ENCODE measurements at regions of chr9 and their contacts with region 1.

Region 1: GRCh38 chr9:115591584-115591984 is 473.6 kb upstream of the TNC start:
- DNase-seq: peak; percentile 48 to 63
- H3K4me3 ChIP-seq: no peak overlapping the region
- H3K27ac ChIP-seq: no peak overlapping the region
- H3K4me1 ChIP-seq: peaks cover 1 to 8% (median 2%) of the 10 kb centered on the region in 4 experiments; a peak in 3 of 7 replicates
- H3K27me3 ChIP-seq: no peaks in the 10 kb centered on the region
- CTCF ChIP-seq: peak in 2 of 3 experiments; percentile 67 to 92; a peak in 3 of 4 replicates
- EP300 ChIP-seq: no peak
- POLR2A ChIP-seq: no peak
- RAD21 ChIP-seq: peak; percentile 84 to 89

Region 2: DNA sequence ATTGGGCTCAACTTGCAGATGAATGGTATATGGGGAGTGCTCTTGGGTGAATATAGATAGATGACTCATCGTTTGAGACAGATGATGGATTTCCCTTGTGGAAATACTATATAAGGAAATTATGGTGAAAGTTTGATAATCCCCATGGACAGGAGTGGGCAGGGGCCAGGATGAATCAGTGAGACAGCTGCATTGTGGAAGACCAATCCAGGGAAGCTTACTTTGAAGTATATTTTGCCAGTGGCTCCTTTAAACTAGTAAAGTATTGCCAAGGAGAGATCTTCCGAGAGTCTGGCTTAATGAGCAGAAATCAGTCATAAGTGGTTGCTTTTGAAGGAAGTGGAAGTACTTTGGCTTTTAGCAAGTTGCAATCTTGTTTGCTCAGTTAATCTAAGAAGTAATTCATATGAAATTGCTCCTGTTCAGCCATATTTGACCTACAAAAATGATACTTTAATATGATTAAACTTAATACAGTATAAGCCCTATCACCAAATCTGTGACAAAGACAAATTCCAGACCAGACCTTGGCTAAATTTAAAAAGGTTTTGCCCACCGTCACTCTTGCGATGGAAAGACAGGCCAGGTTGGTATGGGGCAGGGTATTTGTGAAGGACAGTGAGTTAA is 464.3 kb before region 1 on chr9:
- CTCF ChIA-PET with region 1: no interaction called
- POLR2A ChIA-PET with region 1: no interaction called
- DNase-seq: no peak
- H3K4me3 ChIP-seq: no peak overlapping the region
- H3K27ac ChIP-seq: no peak overlapping the region
- H3K4me1 ChIP-seq: no peaks in the 10 kb centered on the region
- H3K27me3 ChIP-seq: no peaks in the 10 kb centered on the region; a peak in 2 of 7 replicates
- CTCF ChIP-seq: no peak
- EP300 ChIP-seq: no peak
- POLR2A ChIP-seq: no peak
- RAD21 ChIP-seq: no peak

Region 3: DNA sequence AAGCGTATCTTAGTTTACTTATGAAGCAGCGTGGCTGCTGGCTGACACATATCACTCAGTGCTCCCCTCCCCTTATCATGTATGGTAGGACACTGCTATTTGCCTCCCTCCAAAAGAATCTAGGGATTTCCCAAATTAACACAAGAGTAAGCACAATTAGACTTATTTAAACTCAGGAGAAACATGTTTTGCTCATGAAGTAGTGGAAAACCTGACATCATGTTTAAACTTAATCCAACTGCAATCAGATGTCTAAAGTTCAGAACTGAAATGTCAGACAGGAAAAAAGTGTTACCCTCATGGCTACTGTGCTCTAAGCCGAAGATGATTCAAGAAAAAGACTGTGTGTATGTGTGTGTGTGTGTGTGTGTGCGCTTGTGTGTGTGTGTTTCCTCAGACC is 149.5 kb before region 1 on chr9:
- CTCF ChIA-PET with region 1: no interaction called
- POLR2A ChIA-PET with region 1: no interaction called
- DNase-seq: no peak
- H3K4me3 ChIP-seq: no peak overlapping the region
- H3K27ac ChIP-seq: no peak overlapping the region
- H3K4me1 ChIP-seq: no peaks in the 10 kb centered on the region
- H3K27me3 ChIP-seq: no peaks in the 10 kb centered on the region
- CTCF ChIP-seq: no peak
- EP300 ChIP-seq: no peak
- POLR2A ChIP-seq: no peak
- RAD21 ChIP-seq: no peak

Region 4: DNA sequence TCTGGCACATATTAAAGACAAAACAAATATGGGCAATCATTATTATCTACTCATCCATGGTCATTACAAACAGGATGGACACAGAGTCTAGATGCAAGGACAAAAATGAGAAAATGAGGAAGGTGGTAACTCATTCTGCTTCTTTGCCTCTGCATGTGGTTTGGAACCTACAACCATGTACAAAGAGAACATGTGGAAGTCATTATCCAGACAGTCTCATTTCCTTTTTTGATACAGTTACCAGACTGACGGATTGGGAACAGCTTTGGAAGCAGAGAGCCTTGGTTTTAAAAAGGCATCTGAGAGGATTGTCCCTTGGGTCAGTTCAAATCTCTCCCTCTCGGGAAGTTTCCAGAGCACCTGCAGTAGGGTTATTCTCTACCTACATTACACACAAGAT is 40.2 kb before region 1 on chr9:
- CTCF ChIA-PET with region 1: no interaction called
- POLR2A ChIA-PET with region 1: no interaction called
- DNase-seq: no peak
- H3K4me3 ChIP-seq: no peak overlapping the region
- H3K27ac ChIP-seq: no peak overlapping the region
- H3K4me1 ChIP-seq: peaks cover 0 to 6% (median 3%) of the 10 kb centered on the region in 4 experiments; a peak in 2 of 7 replicates
- H3K27me3 ChIP-seq: no peaks in the 10 kb centered on the region
- CTCF ChIP-seq: no peak
- EP300 ChIP-seq: no peak
- POLR2A ChIP-seq: no peak
- RAD21 ChIP-seq: no peak

Region 5: DNA sequence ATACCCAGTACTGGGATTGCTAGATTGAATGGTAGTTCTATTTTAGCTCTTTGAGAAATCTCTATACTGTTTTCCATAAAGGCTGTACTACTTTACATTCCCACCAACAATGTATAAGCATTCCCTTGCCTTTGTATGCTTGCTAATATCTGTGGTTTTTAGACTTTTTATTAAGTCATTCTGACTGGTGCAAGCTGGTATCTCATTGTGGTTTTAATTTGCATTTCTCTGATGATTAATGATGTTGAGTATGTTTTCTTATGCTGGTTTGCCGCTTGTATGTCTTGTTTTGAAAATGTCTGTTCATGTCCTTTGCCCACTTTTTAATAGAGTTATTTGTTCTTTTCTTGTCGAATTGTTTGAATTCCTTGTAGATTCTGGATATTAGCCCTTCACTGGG is 49.3 kb after region 1 on chr9:
- CTCF ChIA-PET with region 1: interaction called, 14 read pairs
- POLR2A ChIA-PET with region 1: no interaction called
- DNase-seq: no peak
- H3K4me3 ChIP-seq: no peak overlapping the region
- H3K27ac ChIP-seq: no peak overlapping the region
- H3K4me1 ChIP-seq: no peaks in the 10 kb centered on the region
- H3K27me3 ChIP-seq: no peaks in the 10 kb centered on the region
- CTCF ChIP-seq: no peak
- EP300 ChIP-seq: no peak
- POLR2A ChIP-seq: no peak
- RAD21 ChIP-seq: no peak

Region 6: DNA sequence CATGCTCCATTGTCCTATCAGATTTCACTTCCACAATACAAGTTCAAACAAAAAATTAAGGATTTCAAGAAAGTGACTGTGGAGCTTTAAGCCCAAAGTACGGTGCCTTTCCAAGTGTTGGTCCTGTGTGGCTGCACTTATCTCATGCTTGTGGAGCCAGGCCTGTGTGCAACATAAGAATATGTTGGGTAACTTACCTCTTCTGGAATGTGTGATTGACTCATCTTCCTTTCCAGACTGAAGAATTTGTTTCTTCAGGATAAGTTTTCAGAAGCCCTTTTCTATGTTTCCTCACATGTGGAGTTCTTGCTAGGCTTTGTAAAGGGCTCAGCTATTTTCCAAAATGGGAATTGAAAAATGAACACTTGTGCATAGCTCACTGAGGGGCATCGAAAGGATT is 76.9 kb after region 1 on chr9:
- CTCF ChIA-PET with region 1: interaction called, 35 read pairs
- POLR2A ChIA-PET with region 1: no interaction called
- DNase-seq: no peak
- H3K4me3 ChIP-seq: no peak overlapping the region
- H3K27ac ChIP-seq: no peak overlapping the region
- H3K4me1 ChIP-seq: no peaks in the 10 kb centered on the region; a peak in 1 of 7 replicates
- H3K27me3 ChIP-seq: no peaks in the 10 kb centered on the region
- CTCF ChIP-seq: no peak
- EP300 ChIP-seq: no peak
- POLR2A ChIP-seq: no peak
- RAD21 ChIP-seq: no peak

Region 7: GRCh38 chr9:115864581-115864980 is 273.0 kb after region 1 on chr9:
- CTCF ChIA-PET with region 1: no interaction called
- POLR2A ChIA-PET with region 1: no interaction called
- DNase-seq: no peak
- H3K4me3 ChIP-seq: no peak overlapping the region
- H3K27ac ChIP-seq: no peak overlapping the region
- H3K4me1 ChIP-seq: no peaks in the 10 kb centered on the region
- H3K27me3 ChIP-seq: no peaks in the 10 kb centered on the region
- CTCF ChIP-seq: no peak
- EP300 ChIP-seq: no peak
- POLR2A ChIP-seq: no peak
- RAD21 ChIP-seq: no peak

Region 8: GRCh38 chr9:115877920-115878319 is 286.3 kb after region 1 on chr9:
- CTCF ChIA-PET with region 1: interaction called, 13 read pairs
- POLR2A ChIA-PET with region 1: no interaction called
- DNase-seq: no peak
- H3K4me3 ChIP-seq: no peak overlapping the region
- H3K27ac ChIP-seq: no peak overlapping the region
- H3K4me1 ChIP-seq: no peaks in the 10 kb centered on the region
- H3K27me3 ChIP-seq: no peaks in the 10 kb centered on the region
- CTCF ChIP-seq: no peak
- EP300 ChIP-seq: no peak
- POLR2A ChIP-seq: no peak
- RAD21 ChIP-seq: no peak

Region 9: DNA sequence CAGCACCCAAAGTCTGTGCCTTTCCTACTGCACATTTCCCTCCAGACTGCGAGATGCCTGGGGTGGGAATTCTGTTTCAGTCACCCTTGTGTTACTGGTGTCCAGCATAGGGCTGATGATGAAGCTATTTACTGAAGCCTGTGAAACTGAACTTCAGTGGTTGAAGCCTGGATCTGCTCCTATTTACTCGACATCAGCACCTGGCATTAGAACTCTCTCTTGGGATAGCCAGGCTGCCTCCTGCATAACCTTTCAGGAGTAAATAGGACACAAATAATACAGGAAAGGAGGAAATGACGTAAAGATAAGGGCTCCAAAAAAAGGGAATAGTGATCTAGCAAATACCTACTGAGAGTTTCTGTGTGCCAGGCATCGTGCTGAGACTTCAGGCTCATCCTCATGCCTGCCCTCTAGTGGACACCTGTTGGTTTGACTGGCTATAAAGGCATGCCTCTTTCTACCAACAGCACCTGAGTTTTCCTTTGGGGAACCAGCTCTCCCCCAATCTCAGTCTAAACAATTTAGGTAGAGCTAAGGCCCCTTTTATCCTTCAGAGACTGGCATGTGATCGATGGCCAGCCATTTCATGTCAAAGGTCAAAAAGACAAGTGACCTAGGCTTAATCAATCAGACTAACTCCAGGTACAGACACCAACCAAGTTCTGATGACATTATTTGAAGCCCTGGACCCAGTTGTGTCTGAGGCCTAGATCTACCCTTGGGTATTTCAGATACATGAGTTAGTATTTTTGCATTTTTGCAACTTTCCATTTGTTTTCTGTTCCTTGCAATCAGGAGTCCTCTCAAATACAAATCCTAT is 903.4 kb after region 1 on chr9:
- CTCF ChIA-PET with region 1: interaction called, 13 read pairs
- POLR2A ChIA-PET with region 1: no interaction called
- DNase-seq: peak in 1 of 2 experiments; percentile 74
- H3K4me3 ChIP-seq: no peak overlapping the region
- H3K27ac ChIP-seq: no peak overlapping the region
- H3K4me1 ChIP-seq: peaks cover 0 to 4% (median 3%) of the 10 kb centered on the region in 4 experiments; a peak in 2 of 7 replicates
- H3K27me3 ChIP-seq: no peaks in the 10 kb centered on the region
- CTCF ChIP-seq: peak; percentile 75 to 92 (median 76)
- EP300 ChIP-seq: no peak
- POLR2A ChIP-seq: no peak
- RAD21 ChIP-seq: peak; percentile 77 to 78